IMR-90 (cell line): ENCODE measurements at regions of chr3 and their contacts with region 1.

Region 1: GRCh38 chr3:127978636-127979035 is 63.6 kb downstream of the KBTBD12 start:
- DNase-seq: peak; percentile 5
- ATAC-seq: no peak
- H3K4me3 ChIP-seq: no peak overlapping the region
- H3K27ac ChIP-seq: no peak overlapping the region
- H3K4me1 ChIP-seq: no peaks in the 10 kb centered on the region
- H3K27me3 ChIP-seq: peaks cover 28% of the 10 kb centered on the region
- CTCF ChIP-seq: no peak
- POLR2A ChIP-seq: no peak
- RAD21 ChIP-seq: no peak

Region 2: GRCh38 chr3:127865941-127866340 is 112.7 kb before region 1 on chr3:
- CTCF ChIA-PET with region 1: no interaction called
- POLR2A ChIA-PET with region 1: no interaction called
- dilution Hi-C with region 1: no loop called
- in situ Hi-C with region 1: no loop called
- intact Hi-C with region 1: no loop called
- DNase-seq: peak; percentile 49
- ATAC-seq: peak; percentile 65
- H3K4me3 ChIP-seq: no peak overlapping the region
- H3K27ac ChIP-seq: no peak overlapping the region
- H3K4me1 ChIP-seq: no peaks in the 10 kb centered on the region
- H3K27me3 ChIP-seq: peaks cover 23% of the 10 kb centered on the region
- CTCF ChIP-seq: peak; percentile 20; the same call in 1 of the 2 replicates
- POLR2A ChIP-seq: no peak
- RAD21 ChIP-seq: peak; percentile 37

Region 3: GRCh38 chr3:127915115-127915936 is 63.3 kb before region 1 on chr3 and contains the start of gene KBTBD12:
- CTCF ChIA-PET with region 1: no interaction called
- POLR2A ChIA-PET with region 1: no interaction called
- dilution Hi-C with region 1: no loop called
- in situ Hi-C with region 1: no loop called
- intact Hi-C with region 1: no loop called
- DNase-seq: no peak
- ATAC-seq: no peak
- H3K4me3 ChIP-seq: no peak within 1 kb of the TSS; the same call in 1 of the 2 replicates
- H3K27ac ChIP-seq: no peak within 1 kb of the TSS
- H3K4me1 ChIP-seq: no peaks in the 10 kb centered on the region
- H3K27me3 ChIP-seq: peaks cover 56% of the 10 kb centered on the region
- CTCF ChIP-seq: no peak
- POLR2A ChIP-seq: no peak
- RAD21 ChIP-seq: no peak
- total RNA-seq, gene KBTBD12: not detected in 2 replicates

Region 4: DNA sequence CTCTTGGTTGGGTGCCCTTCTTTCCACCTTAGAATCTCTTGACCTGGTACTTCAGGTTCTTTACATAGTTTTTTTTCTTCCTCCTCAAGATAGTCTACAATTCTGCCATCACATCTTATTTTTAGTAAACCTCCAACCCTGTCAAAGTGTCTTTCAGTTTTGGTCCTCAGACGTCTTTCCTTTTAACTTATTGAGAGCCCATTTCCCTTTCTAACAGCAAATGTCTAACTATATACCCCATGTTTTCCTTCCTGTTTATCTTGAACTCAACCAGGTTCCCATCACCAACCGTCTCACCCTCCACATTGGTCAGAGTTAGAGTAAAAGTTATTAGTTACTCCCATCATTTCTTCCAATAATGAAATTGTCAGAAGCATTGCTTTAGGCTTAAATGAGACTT is 53.3 kb before region 1 on chr3:
- CTCF ChIA-PET with region 1: no interaction called
- POLR2A ChIA-PET with region 1: no interaction called
- dilution Hi-C with region 1: no loop called
- in situ Hi-C with region 1: no loop called
- intact Hi-C with region 1: loop called (anchors 2 kb)
- DNase-seq: no peak
- ATAC-seq: no peak
- H3K4me3 ChIP-seq: no peak overlapping the region
- H3K27ac ChIP-seq: no peak overlapping the region
- H3K4me1 ChIP-seq: no peaks in the 10 kb centered on the region
- H3K27me3 ChIP-seq: peaks cover 25% of the 10 kb centered on the region
- CTCF ChIP-seq: no peak
- POLR2A ChIP-seq: no peak
- RAD21 ChIP-seq: no peak

Region 5: DNA sequence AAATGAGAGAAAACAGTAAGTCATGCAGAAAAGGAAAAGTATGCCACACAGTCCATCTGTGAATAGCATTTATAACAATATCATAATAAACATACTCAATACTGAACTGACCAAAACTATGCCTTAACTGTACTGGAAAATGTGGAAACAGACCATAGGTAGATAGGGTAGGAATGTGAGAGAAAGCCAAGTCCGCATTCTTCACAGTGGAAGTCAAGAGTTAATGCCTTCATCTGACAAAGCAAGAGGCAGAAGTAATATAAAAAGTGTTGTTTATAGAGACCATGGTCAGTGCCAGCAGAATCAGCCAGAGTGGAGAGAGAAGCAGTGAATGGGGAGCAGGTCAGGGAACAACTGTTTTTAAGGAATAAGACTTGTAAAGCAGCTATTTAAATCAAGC is 11.3 kb before region 1 on chr3:
- CTCF ChIA-PET with region 1: no interaction called
- POLR2A ChIA-PET with region 1: no interaction called
- dilution Hi-C with region 1: no loop called
- in situ Hi-C with region 1: no loop called
- intact Hi-C with region 1: no loop called
- DNase-seq: peak; percentile 14
- ATAC-seq: no peak
- H3K4me3 ChIP-seq: no peak overlapping the region
- H3K27ac ChIP-seq: no peak overlapping the region
- H3K4me1 ChIP-seq: no peaks in the 10 kb centered on the region
- H3K27me3 ChIP-seq: peaks cover 45% of the 10 kb centered on the region
- CTCF ChIP-seq: no peak
- POLR2A ChIP-seq: no peak
- RAD21 ChIP-seq: no peak

Region 6: DNA sequence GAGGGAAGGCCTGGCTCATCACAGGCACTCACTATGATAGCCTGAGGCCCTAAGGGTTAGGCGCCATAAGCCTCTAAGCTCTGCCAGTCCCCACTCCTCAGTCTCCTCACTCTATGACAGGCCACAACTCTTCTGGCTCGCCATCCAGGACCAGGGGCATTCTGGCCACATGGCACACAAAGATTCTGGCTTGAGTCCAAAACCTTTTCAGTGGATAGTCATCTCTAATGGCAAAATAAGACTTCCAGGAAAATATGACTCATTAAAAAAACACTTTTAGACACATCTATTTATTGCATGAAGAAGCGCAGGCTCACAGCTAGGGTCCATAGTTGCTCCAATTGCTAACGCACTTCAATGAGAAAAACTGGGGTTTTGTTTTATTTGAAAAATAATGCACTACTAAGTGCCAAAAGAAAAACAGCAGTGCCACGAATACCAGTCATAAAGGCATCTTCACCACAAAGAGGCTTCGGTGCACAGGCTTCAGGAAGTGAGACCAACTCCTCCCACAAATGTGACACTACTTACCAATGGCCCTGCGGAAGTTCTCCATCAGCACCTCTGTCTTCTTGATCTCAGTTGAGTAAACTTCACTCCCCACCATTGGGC is 133.8 kb after region 1 on chr3:
- CTCF ChIA-PET with region 1: no interaction called
- POLR2A ChIA-PET with region 1: no interaction called
- dilution Hi-C with region 1: no loop called
- in situ Hi-C with region 1: no loop called
- intact Hi-C with region 1: no loop called
- DNase-seq: peak; percentile 90
- ATAC-seq: peak; percentile 80
- H3K4me3 ChIP-seq: no peak overlapping the region
- H3K27ac ChIP-seq: peak overlapping the region; percentile 54; the same call in 1 of the 2 replicates
- H3K4me1 ChIP-seq: peaks cover 14% of the 10 kb centered on the region
- H3K27me3 ChIP-seq: no peaks in the 10 kb centered on the region
- CTCF ChIP-seq: peak; percentile 11; the same call in 1 of the 2 replicates
- POLR2A ChIP-seq: no peak
- RAD21 ChIP-seq: no peak